Activated CD4-positive, alpha-beta T cell treated with anti-CD3 and anti-CD28 coated beads, Interleukin-2, amount 10 ng/mL, durations not matched to agents 24 days and 14 days (primary cell): ENCODE measurements at regions of chr22 and their contacts with region 1.

Region 1: DNA sequence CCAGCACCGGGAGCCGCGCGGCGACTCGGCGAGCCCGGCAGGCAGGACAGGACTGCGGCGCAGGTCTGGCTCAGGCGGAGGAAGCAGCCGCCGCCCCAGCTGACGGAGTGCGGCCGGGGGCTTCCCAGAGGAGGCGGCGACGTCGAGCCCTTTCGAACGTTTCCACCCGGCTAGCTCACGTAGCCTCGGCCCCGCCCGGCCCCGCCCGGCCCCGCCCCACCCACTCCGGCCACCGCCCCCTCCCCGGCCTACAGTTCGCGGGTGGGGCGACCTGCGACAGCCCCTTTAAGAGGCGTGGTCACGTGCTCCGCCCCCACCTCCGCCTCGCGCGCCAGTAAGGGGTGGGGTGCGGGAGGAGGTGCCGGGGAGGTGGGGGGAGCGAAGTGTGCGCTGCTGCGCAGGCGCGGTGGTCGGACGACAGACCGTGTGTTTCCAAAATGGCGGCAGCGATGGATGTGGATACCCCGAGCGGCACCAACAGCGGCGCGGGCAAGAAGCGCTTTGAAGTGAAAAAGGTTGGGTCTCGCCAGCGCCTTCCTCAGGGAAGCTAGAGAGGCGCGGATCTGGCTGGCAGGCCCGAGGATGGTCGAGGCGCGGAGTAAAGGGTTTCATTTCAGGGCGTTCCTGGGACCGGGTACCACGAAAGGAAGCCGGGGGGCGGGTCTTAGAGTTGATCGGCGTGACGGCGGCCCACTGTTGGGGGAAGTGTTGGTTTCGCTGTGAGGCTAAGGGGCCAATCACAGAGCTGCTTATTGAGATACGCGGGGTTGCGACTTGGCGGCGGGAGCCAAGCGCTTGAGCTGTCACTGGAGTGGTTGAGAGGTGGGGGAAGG is at the start of gene RBX1:
- DNase-seq: peak; percentile 100
- H3K4me3 Mint-ChIP-seq: peak within 1 kb of the TSS; percentile 98
- H3K27ac Mint-ChIP-seq: peak within 1 kb of the TSS; percentile 100
- H3K4me1 Mint-ChIP-seq: peaks cover 33% of the 10 kb centered on the region
- H3K27me3 Mint-ChIP-seq: no peaks in the 10 kb centered on the region
- total RNA-seq, gene RBX1: 98.5 and 106 TPM in 2 replicates

Region 2: DNA sequence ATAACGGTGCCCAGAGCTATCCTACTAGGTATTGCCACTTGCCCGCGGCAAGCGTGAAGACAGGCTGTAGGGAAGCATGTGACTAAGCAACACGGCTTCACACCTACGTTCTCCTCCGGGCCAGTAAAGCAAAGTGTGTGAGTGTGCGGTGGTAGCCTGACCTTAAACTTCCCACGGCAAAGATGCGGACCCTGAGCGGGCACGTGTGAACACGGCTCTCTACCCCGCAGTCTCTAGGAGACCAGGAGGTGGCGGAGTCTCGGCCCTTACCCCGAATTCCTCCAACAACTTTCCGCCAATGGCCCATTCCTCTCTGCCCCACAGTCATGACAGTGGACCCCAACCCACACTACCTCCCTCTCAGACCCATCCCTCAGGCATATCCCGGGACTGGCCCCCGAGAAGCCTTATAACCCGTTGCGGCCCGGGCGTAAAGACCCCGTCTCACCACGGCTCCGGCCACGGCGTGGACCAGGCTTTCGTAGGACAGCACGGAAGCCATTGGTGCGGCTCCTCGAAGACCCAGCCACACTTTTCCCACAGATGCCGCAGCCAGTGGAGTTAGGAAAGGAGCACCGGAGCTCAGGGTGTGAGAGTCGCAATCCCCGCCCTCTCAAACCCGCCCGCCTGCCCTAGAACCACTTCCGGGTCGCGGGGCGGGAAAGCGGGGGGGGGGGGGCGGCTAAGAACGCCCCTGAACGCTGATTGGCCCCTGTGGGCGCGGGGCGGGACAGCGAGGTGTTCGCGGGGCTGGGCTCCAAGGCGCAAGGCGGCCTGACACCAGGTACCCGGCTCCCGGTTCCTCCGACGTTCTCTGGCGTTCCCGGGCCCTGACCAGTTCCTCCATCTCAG is 132.2 kb before region 1 on chr22 and contains the start of gene SLC25A17:
- intact Hi-C with region 1: loop called (anchors 2 kb)
- DNase-seq: peak; percentile 96
- H3K4me3 Mint-ChIP-seq: peak within 1 kb of the TSS; percentile 92
- H3K27ac Mint-ChIP-seq: peak within 1 kb of the TSS; percentile 94
- H3K4me1 Mint-ChIP-seq: peaks cover 30% of the 10 kb centered on the region
- H3K27me3 Mint-ChIP-seq: no peaks in the 10 kb centered on the region
- total RNA-seq, gene SLC25A17: 32.8 and 37.7 TPM in 2 replicates

Region 3: GRCh38 chr22:40856513-40857308 is 94.5 kb before region 1 on chr22 and contains the starts of genes ST13 and XPNPEP3:
- intact Hi-C with region 1: loop called (anchors 2 kb)
- DNase-seq: peak; percentile 99
- H3K4me3 Mint-ChIP-seq: peak within 1 kb of the TSS; percentile 96
- H3K27ac Mint-ChIP-seq: peak within 1 kb of the TSS; percentile 100
- H3K4me1 Mint-ChIP-seq: peaks cover 42% of the 10 kb centered on the region
- H3K27me3 Mint-ChIP-seq: peaks cover 2% of the 10 kb centered on the region
- total RNA-seq, gene ST13: 210 and 215 TPM in 2 replicates
- total RNA-seq, gene XPNPEP3: 17.6 and 17.7 TPM in 2 replicates

Region 4: DNA sequence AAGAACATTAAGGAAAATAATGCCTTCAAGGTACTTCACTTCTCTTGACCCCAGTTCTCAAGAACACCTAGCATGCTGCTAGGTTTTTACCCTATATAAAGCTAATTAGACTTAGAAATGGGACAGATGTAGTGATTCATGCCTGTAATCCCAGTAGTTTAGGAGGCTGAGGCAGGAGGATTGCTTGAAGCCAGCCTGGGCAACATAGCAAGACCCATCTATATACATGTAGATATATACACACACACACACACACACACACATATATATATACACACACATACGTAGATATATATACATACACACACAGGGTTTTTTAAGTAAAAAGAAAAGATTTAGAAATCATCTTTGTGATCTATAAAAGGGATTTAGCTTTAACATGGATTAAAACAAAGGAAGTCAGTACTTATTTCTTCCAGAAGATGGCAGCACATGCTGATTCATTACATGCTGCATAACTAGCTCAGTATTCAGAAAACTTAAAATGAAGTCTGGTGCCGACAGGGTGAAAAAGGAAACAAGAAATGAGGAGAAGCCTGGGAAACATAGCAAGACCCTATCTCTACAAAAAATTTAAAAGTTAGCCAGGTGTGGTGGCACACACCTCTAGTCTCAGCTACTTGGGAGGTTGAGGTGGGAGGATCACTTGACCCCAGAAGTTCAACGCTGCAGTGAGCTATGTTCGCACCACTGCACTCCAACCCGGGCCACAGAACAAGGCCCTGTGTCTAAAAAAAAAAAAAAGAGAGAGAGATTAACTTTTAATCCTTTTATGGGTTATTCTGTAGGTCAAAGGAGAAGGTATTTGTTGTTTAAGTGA is 28.5 kb before region 1 on chr22:
- intact Hi-C with region 1: loop called (anchors 2 kb)
- DNase-seq: peak; percentile 83
- H3K4me3 Mint-ChIP-seq: peak overlapping the region; percentile 14
- H3K27ac Mint-ChIP-seq: peak overlapping the region; percentile 42
- H3K4me1 Mint-ChIP-seq: peaks cover 4% of the 10 kb centered on the region
- H3K27me3 Mint-ChIP-seq: no peaks in the 10 kb centered on the region

Region 5: DNA sequence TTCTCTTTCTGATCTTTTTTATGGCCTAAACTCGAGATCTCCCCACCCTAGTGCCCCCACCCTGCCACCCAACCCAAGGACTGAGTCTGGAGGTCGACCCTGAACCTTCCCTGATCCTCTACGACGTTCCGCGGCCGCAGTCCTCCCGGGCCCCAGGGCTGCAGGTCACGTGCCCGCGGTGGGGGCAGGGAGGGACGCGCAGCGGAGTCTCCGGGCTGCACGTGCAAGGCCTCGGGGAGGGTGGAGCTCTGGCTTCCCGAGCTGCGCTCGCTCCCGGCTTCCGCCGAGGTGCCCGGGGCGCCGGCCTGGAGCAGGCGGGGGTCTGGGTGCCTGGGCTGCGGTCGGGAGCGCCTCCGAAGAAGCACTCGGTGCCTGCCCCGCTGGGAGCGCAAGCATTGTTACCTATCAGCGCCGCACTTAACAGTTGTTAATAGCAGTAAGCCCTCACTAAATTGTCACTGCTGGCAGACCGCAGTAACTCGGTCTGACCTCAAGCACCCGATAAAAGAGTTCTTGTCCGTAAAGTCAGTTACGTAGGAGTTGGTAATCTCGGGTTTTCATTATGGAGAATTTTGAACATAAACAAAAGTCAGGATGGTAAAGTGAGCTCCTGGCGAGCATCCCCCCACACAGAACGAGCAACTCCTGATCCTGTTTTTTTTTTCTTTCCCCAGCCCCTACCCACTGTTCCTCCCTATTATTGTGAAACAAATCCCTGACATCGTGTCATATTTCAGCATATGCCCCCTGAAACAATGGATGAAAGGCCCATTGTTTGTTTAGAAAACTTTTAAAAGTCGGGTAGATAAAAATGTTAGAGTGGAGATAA is 71.5 kb after region 1 on chr22:
- intact Hi-C with region 1: loop called (anchors 2 kb)
- DNase-seq: peak; percentile 93
- H3K4me3 Mint-ChIP-seq: peak overlapping the region; percentile 86
- H3K27ac Mint-ChIP-seq: peak overlapping the region; percentile 88
- H3K4me1 Mint-ChIP-seq: peaks cover 20% of the 10 kb centered on the region
- H3K27me3 Mint-ChIP-seq: peaks cover 10% of the 10 kb centered on the region

Region 6: GRCh38 chr22:41091132-41092022 is 140.2 kb after region 1 on chr22:
- intact Hi-C with region 1: loop called (anchors 1 kb)
- DNase-seq: peak; percentile 99
- H3K4me3 Mint-ChIP-seq: peak overlapping the region; percentile 90
- H3K27ac Mint-ChIP-seq: peak overlapping the region; percentile 99
- H3K4me1 Mint-ChIP-seq: peaks cover 26% of the 10 kb centered on the region
- H3K27me3 Mint-ChIP-seq: no peaks in the 10 kb centered on the region

Region 7: DNA sequence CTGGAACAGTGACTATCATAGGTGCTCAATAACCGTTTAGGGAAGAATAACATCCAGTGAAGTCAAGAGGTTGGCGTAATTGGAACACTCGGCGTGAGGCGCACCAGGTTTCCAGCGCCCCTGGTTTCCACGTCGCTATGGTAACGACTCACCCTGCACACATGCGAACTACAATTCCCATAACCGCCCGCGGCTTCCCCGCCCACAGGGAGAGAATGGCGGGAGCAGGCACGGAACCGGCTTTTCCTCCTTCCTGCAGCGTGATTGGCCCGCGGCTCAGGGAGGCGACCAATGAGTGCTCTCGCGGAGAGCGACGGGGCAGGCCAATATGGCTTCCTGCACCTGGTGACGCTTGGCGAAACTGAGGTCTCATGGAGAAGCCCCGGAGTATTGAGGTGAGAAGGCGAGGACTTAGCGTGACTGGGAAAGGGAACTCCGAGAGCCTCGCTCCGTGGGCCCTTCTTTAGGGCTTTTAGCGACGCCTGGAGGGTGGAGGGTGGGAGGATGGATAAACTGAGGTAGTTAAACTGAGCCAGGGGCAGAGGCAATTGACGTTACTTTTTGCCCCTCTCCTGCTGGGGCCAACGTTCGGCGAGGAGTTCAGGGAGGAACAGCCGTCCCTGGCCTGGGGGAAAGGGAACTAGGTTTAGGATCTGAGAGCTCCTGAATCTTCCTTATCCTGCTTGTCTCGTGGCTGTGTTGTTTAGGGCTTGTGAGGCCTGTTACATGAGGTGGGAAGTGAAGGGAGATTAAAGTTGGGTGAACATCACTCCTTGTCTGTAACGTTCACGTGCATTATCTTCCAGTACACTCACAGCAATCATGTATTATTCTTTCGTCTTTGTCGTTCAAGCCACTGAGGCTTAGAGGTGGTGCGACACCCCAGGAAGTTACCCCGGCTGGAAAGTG is 254.1 kb after region 1 on chr22 and contains the start of gene L3MBTL2:
- intact Hi-C with region 1: loop called (anchors 1 kb)
- DNase-seq: peak; percentile 100
- H3K4me3 Mint-ChIP-seq: peak within 1 kb of the TSS; percentile 94
- H3K27ac Mint-ChIP-seq: peak within 1 kb of the TSS; percentile 94
- H3K4me1 Mint-ChIP-seq: peaks cover 20% of the 10 kb centered on the region
- H3K27me3 Mint-ChIP-seq: peaks cover 19% of the 10 kb centered on the region
- total RNA-seq, gene L3MBTL2: 53.3 and 55.0 TPM in 2 replicates